RWPE1 (cell line): ENCODE measurements at regions of chr2 and their contacts with region 1.

Region 1: GRCh38 chr2:74198461-74199274 is at the start of gene MTHFD2:
- DNase-seq: peak; percentile 98
- H3K27ac ChIP-seq: peak within 1 kb of the TSS; percentile 98
- CTCF ChIP-seq: peak; percentile 83

Region 2: DNA sequence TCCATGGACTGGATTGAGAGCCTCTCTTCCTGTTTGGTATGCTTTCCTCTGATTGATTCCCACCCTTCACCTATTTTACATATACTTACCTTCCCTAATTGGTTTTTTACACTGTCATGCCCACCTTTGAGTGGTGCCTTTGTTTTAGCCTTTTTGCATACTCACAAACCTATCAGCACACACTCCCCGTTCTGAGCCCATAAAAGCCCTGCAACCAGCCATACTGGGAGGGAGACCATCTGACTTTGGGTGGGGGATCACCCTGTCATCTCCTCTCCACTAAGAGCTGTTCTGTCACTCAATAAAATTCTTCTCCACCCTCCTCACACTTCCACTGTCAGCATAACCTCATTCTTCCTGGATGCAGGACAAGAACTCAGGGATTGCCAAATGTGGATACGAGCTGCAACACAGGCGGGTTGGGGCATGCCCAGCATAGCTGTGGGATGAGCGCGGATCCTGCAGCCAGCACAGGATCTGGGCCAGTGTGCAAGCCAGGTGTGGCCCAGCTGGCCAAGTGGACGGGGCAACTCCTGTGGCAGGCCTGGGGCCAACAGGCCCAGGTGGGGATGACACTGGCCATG is 10.6 kb before region 1 on chr2:
- CTCF ChIA-PET with region 1: interaction called, 5 read pairs
- POLR2A ChIA-PET with region 1: interaction called, 10 read pairs
- DNase-seq: peak; percentile 83
- H3K27ac ChIP-seq: peak overlapping the region; percentile 75
- CTCF ChIP-seq: no peak